ENCODE measurements at regions of chr5 and their contacts with region 1.

Region 1: DNA sequence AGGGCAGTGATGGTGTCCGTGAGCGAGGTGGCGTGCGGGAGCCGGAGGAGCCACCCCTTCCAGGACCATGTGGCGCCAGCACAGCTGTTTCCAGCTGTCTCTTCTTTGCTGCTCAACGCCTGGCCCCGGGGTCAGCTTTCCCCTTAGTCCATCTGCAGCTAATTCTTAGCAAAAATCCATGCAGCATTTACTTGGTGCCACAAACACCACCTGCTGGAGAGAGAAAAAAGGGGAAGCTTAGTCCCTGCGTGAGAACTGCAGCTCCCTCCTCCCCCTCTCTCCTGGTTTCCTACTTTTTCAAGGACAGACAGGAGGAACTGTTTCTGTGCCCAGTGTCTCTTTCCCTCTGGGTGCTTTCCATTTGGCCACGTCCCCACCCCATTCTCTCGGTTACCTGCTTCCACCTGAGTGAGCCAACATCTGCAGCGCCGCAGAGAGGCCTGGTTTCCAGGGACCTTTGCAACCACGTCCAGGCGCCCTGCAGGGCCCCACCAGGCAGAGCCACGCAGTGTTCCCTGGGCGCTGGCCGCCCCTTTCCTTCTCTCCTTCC is 3.4 kb downstream of the SLC6A19 start:
- DNase-seq: peak; percentile 28 to 58
- ATAC-seq: peak; percentile 25 to 57; a peak in 5 of 6 replicates
- H3K4me3 ChIP-seq: no peak overlapping the region
- H3K27ac ChIP-seq: no peak overlapping the region
- H3K4me1 ChIP-seq: no peaks in the 10 kb centered on the region; the same call in 2 of the 3 replicates
- CTCF ChIP-seq: no peak
- EP300 ChIP-seq: no peak
- POLR2A ChIP-seq: no peak
- RAD21 ChIP-seq: no peak

Region 2: DNA sequence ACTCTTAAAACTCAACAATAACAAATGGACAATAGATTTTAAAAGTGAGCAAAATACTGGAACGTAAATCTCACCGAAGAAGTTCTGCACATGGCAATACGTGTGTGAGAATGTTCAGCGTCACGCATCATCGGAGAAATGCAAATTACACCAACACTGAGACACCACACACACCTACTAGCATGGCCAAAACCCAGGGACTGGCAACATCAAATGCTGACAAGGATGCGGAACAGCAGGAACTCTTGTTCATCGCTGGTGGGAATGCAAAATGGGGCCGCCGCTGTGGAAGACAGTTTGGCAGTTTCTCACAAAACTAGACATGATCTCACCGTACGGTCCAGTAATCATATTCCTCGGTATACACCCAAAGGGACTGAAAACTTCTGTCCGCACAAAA is 161.7 kb after region 1 on chr5:
- CTCF ChIA-PET with region 1: interaction called, 11 read pairs
- POLR2A ChIA-PET with region 1: no interaction called
- DNase-seq: no peak
- ATAC-seq: no peak
- H3K4me3 ChIP-seq: no peak overlapping the region
- H3K27ac ChIP-seq: no peak overlapping the region
- H3K4me1 ChIP-seq: no peaks in the 10 kb centered on the region
- CTCF ChIP-seq: no peak
- EP300 ChIP-seq: no peak
- POLR2A ChIP-seq: no peak
- RAD21 ChIP-seq: no peak

Region 3: DNA sequence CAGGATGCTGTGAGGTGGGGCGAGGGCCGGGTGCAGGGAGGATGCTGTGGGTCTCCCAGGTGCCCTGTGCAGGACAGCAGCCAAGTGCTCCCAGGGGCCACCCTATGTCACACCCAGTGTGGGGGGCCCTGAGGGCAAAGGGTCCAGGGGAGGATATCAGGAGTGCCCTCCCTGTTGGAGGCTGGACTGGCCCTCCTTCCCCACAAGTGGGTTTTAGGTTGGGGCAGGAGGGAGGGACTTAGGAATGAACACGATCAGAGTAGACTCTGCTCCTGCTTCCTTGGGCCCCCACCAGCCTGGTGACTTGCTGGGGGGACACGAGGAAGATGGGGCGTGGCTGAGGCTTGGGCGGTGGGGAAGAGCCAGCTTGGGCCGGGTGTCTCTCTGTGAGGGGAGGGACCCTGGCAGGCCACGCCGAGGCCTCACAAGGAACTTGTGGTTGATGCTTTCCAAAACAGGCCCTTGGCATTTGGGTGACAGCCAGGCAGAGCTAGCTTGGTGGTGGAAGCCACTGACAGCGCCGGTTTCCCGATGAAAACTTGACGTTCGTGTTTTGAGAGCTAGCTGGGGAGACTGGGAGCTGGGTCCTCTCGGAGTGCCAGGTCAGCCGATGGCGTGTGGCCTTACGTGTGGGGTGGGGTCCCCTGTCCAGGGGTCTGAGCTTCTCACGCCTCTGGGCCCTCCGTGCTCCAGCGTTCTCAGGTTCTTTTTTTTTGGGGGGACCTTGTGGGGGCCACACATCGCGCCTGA is 448.0 kb after region 1 on chr5:
- CTCF ChIA-PET with region 1: interaction called, 16 read pairs
- POLR2A ChIA-PET with region 1: no interaction called
- DNase-seq: no peak
- ATAC-seq: peak in 1 of 2 experiments; percentile 3; a peak in 2 of 6 replicates
- H3K4me3 ChIP-seq: peak overlapping the region; percentile 37; the same call in 1 of the 3 replicates
- H3K27ac ChIP-seq: no peak overlapping the region
- H3K4me1 ChIP-seq: peaks cover 10% of the 10 kb centered on the region; the same call in 2 of the 3 replicates
- CTCF ChIP-seq: no peak
- EP300 ChIP-seq: no peak
- POLR2A ChIP-seq: no peak
- RAD21 ChIP-seq: no peak

Measured in A549 (cell line).